ENCODE measurements at regions of chr2 and their contacts with region 1.

Region 1: DNA sequence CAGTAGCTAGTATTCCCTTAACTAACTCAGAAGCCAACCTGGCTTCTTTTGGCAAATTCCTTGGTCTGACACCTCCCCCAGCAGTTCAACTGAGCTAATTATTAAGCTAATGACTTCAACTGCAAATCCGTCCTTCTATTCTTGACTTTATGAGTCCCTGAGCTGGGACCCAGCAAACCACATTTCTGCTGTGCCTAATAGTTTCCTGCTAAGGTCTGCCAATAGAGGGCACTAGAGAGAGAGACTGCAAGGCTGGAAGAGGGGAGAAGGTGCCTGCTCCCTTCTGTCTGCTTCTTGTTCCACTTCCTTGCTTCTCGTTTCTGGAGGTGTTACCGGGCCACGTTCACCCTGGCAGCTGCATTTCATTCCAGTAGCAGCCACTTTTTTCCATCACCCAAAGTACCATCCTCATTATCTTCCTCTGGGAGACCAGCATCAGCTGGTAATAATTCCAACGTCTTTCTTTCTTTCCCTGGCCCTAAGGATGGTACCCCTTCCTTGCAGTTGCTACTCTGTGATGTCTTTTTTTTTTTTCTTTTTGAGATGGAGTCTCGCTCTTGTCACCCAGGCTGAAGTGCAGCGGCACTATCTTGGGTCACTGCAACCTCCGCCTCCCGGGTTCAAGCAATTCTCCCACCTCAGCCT is 352.0 kb downstream of the TNS1 start:
- DNase-seq: peak; percentile 25
- H3K4me3 Mint-ChIP-seq: no peak overlapping the region
- H3K27ac Mint-ChIP-seq: no peak overlapping the region
- H3K4me1 Mint-ChIP-seq: no peaks in the 10 kb centered on the region
- H3K27me3 Mint-ChIP-seq: peaks cover 11% of the 10 kb centered on the region

Region 2: DNA sequence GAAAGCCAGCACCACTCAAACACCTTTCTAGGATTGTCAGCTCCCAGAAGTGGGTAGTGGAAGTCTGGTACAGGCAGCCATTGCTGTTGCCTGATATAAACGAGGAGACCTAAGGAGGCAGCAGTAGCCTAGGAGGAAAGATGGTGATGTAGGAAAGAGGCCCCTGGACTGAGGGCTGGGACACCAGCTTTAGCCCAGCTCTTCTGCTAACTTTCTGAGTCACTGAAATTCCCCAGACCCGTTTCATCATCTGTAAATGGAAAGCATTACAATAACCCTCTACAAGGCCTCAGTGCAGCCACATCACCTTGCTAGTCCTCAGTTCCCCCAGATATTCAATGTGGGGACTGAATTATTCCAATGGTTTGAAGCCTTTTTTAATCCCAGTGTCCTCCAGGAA is 15.5 kb after region 1 on chr2:
- CTCF ChIA-PET with region 1: interaction called, 22 read pairs
- DNase-seq: no peak
- H3K4me3 Mint-ChIP-seq: no peak overlapping the region
- H3K27ac Mint-ChIP-seq: no peak overlapping the region
- H3K4me1 Mint-ChIP-seq: peaks cover 2% of the 10 kb centered on the region
- H3K27me3 Mint-ChIP-seq: peaks cover 4% of the 10 kb centered on the region

Region 3: DNA sequence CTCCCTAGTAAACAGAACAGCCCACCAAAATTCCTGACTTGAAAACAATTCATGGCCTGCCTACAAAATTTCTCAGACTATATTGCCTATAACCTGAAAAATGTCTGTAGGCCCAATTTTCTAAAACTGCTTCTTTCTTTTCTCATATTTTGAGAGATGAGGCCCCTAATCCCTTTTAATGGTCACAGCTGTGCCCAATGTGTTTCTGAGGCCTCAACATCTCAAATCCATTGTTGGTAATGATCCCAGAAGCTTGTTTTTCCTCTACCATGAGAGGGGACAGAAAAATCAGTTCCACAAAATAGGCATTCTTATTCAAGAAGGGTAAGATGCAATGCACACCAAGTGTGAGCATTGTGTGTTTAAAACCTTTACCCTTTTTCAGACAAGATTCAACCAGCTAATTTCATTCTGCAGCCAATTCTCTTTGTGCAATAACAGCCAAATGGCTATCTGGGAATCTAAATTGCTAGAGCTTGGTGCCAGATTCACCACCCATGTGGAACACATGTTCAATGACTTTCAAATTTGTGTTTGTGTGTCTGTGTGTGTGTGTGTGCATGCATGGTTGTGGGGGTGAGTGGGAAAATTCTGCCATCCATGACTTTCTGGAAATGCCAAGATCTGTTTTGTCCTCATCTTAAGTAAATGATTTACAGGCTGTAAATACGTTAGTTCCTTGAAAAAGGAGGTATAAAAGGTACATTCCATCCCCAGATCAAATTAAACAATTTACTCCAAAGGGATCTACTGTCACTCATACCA is 32.5 kb after region 1 on chr2:
- CTCF ChIA-PET with region 1: no interaction called
- DNase-seq: no peak
- H3K4me3 Mint-ChIP-seq: no peak overlapping the region
- H3K27ac Mint-ChIP-seq: no peak overlapping the region
- H3K4me1 Mint-ChIP-seq: no peaks in the 10 kb centered on the region
- H3K27me3 Mint-ChIP-seq: no peaks in the 10 kb centered on the region

Region 4: DNA sequence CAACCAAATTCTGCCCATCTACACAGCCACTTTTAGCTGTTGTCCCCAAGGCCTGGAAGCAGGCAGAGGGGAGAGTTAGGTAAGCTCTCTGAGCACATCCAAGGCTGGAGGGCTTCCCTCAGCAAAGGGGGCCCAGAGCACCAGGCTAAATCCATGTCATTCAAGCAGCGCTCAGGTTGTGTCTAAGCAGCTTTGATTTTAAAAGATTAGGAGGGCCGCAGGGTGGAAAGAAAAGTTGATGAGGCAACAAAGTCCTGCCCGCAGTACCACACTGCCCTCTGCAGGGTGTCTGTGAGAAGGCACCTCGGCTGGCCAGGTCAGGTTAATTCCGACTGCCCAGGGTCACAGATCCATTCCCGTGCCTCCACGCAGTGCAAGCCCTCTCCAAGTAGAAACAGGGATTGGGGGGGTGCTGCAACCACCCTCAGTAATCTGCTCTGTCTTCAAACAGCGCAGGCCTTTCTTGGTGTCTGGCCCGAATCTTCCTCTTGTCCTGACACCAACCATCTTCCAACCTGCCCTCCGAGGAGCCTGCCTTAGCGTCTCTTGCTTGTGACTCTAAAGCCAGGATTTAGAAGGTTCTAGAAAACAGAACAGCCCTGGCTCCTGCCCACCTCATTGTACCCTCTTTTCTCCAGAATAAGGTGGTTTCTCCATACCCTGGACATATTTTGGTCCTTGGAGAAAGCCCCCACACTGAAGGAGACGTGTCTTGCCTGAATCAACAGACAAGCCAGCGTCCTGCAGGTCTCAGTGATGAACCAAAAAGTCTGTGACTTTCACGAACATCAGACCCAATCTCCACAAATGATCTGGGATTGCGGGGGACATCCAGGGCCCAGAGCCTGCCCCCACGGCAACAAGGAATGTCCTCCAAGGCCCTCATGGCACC is 62.8 kb after region 1 on chr2:
- CTCF ChIA-PET with region 1: interaction called, 30 read pairs
- DNase-seq: peak; percentile 79
- H3K4me3 Mint-ChIP-seq: no peak overlapping the region
- H3K27ac Mint-ChIP-seq: no peak overlapping the region
- H3K4me1 Mint-ChIP-seq: no peaks in the 10 kb centered on the region
- H3K27me3 Mint-ChIP-seq: peaks cover 12% of the 10 kb centered on the region

Measured in activated naive CD4-positive, alpha-beta T cell treated with anti-CD3 and anti-CD28 coated beads, Interleukin-2, amount 10 ng/mL, durations not matched to agents 7 days and 5 days (primary cell).